Activated B cell treated with CpG ODN at 0.5 μM for 24 hours (primary cell): ENCODE measurements at regions of chr12 and their contacts with region 1.

Region 1: GRCh38 chr12:94532490-94533422 is 73.1 kb upstream of the CEP83 start:
- DNase-seq: peak; percentile 63
- ATAC-seq: peak; percentile 88
- H3K4me3 Mint-ChIP-seq: no peak overlapping the region
- H3K27ac Mint-ChIP-seq: no peak overlapping the region
- H3K4me1 Mint-ChIP-seq: peaks cover 5% of the 10 kb centered on the region
- H3K27me3 Mint-ChIP-seq: peaks cover 9% of the 10 kb centered on the region
- CTCF ChIP-seq: no peak

Region 2: DNA sequence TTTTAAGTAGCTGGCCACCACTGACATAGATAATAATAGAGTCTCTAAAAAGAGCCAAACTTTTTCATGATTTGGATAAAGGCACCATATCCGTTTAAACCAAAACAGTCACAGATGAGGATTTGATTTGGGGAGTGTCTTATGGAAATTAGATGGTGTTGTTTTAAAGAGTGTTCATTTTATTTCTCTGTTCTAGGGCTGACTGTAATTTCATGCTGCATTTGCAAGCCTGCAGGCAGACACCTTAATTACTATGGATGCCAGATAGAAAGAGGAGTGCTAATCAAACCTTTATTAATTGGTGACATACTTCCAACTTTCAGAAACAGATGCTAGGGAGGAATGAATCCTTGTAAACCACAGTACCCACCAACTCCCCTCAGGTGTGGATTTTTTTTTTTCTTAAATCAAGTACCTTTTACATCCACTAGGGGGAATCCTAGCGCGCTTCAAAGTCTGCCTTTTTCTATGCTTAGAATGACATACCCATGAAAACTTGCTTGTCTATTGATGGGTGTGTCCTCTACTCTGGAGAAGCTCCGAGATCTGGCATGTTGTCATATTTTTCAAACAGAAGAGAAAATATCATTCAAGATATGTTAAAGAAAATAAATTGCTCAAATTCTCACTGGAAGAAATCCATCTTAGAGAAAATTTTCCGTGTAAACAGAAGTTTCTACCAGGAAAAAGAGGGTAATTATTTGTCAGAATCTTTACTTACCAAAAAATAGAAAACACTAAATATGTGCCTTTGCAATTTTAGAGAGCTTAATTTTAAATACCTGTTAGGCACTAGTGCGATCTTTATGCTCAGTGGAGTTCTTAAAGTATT is 398.6 kb before region 1 on chr12:
- CTCF ChIA-PET with region 1: interaction called, 38 read pairs
- POLR2A ChIA-PET with region 1: no interaction called
- intact Hi-C with region 1: loop called (anchors 1 kb)
- DNase-seq: no peak
- ATAC-seq: peak; percentile 97
- H3K4me3 Mint-ChIP-seq: no peak overlapping the region
- H3K27ac Mint-ChIP-seq: no peak overlapping the region
- H3K4me1 Mint-ChIP-seq: peaks cover 9% of the 10 kb centered on the region
- H3K27me3 Mint-ChIP-seq: no peaks in the 10 kb centered on the region
- CTCF ChIP-seq: peak; percentile 19

Region 3: GRCh38 chr12:94140556-94140955 is 392.2 kb before region 1 on chr12:
- CTCF ChIA-PET with region 1: interaction called, 38 read pairs
- POLR2A ChIA-PET with region 1: no interaction called
- intact Hi-C with region 1: loop called (anchors 1 kb)
- DNase-seq: no peak
- ATAC-seq: peak; percentile 42
- H3K4me3 Mint-ChIP-seq: no peak overlapping the region
- H3K27ac Mint-ChIP-seq: no peak overlapping the region
- H3K4me1 Mint-ChIP-seq: peaks cover 2% of the 10 kb centered on the region
- H3K27me3 Mint-ChIP-seq: no peaks in the 10 kb centered on the region
- CTCF ChIP-seq: no peak

Region 4: DNA sequence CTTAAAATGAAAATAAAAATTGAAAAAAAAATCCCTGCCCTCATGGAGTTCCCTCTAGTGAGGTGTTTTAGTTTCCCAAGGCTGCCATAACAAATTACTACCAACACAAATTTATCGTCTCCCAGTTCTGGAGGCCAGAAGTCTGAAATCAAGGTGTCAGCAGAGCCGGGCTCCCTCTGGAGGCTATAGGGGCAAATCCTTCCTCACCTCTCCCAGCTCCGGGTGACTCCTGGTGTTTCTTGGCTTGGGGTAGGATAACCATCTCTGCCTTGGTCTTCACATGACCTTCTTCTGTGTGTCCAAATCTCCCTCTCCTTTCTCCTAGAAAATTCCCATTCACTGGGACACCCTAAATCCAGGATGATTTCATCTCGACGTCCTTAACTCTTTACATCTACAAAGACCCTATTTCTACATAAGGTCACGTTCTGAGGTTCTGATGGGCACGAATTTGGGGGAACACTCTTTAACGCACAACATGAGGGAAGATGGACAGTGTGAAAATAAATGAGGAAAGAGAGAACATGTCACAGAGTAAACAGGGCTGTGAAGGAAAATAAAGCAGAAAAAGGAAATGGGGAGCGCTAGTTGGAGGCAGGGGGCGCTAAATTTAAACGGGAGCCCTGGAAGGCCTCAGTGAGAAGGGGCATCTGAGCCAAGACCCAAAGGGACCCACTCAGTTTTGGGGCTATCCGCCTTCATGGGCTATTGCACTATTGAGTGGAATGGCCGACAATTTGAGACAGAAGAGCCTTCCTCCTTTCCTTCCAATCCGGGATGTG is 334.1 kb before region 1 on chr12:
- CTCF ChIA-PET with region 1: no interaction called
- POLR2A ChIA-PET with region 1: no interaction called
- intact Hi-C with region 1: loop called (anchors 2 kb)
- DNase-seq: no peak
- ATAC-seq: no peak
- H3K4me3 Mint-ChIP-seq: no peak overlapping the region
- H3K27ac Mint-ChIP-seq: peak overlapping the region; percentile 48
- H3K4me1 Mint-ChIP-seq: peaks cover 18% of the 10 kb centered on the region
- H3K27me3 Mint-ChIP-seq: no peaks in the 10 kb centered on the region
- CTCF ChIP-seq: no peak

Region 5: DNA sequence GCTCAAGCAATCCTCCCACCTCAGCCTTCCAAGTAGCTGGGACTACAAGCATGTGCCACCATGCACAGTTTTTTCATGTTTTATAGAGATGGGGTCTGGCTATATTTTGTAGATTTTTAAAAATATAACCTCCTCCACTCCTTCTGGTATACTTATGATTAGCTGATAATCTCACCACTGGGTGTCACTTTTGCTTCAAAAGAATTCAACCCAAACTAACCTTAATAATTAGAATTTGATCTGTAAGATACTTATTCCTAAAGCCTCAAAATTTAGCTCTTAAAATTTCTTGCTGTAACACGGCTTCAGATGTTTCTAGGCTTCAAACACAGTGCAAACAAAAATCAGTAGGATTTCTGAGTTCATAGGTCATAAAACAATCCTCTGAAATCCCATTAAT is 203.4 kb before region 1 on chr12:
- CTCF ChIA-PET with region 1: no interaction called
- POLR2A ChIA-PET with region 1: no interaction called
- intact Hi-C with region 1: loop called (anchors 2 kb)
- DNase-seq: no peak
- ATAC-seq: no peak
- H3K4me3 Mint-ChIP-seq: no peak overlapping the region
- H3K27ac Mint-ChIP-seq: no peak overlapping the region
- H3K4me1 Mint-ChIP-seq: peaks cover 3% of the 10 kb centered on the region
- H3K27me3 Mint-ChIP-seq: no peaks in the 10 kb centered on the region
- CTCF ChIP-seq: no peak

Region 6: DNA sequence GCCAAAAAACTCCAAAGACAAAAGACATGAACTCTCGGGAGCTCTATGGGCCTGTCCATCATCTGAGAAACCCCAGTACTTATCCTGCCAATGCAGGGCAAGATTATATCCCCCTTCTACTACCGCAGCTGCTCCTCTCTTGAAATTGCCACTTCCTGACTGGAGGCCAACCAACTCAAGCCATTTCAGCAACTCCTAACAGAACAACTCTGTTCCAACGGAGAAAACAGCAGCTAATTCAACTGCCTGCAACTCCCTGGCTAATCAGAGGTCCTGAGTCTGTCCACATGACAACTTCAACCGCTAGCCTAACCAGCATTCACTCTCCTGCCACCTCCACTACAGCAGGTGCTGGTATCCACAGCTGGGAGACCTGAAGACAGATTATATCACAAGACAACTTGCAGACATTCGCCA is 97.2 kb before region 1 on chr12:
- CTCF ChIA-PET with region 1: interaction called, 7 read pairs
- POLR2A ChIA-PET with region 1: no interaction called
- intact Hi-C with region 1: loop called (anchors 1 kb)
- DNase-seq: no peak
- ATAC-seq: no peak
- H3K4me3 Mint-ChIP-seq: no peak overlapping the region
- H3K27ac Mint-ChIP-seq: no peak overlapping the region
- H3K4me1 Mint-ChIP-seq: peaks cover 12% of the 10 kb centered on the region
- H3K27me3 Mint-ChIP-seq: no peaks in the 10 kb centered on the region
- CTCF ChIP-seq: no peak